A549 (cell line): ENCODE measurements at regions of chr20 and their contacts with region 1.

Region 1: DNA sequence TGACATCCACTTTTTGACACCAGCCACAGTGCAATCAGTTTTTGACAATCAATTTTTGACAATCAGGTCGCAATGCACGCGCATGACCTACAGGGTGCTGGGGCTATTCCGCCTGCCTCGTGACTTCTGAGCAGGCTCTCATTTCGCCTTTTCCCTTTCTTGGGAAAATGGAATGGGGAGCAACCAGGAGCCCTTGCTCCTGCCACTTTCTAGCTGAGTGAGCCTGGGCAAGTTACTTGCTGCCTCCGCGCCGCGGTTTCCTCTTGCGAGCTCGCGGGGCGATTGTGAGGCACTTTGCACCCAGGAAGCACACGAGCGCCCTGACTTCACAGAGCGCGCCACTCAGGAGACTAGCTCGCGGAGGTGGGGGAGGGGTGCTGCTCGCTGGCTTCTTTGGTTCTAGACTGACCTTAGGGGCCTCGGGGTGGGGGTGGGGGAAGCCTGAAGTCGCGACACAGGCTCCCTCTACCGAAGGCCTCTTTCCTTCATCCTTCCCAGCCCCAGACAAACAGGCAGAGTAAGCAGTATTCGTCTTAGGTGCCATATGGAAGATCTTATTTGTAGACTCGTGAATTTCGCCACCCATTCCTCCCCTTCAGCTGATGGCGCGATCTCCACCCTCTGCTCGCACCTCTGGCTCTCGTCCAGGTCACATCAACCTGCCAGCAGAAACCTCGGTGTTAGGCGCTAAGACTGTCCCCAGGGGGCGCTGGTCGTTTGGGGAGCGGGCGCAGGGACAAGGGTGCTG is 4.6 kb downstream of the TP53TG5 start:
- DNase-seq: peak; percentile 84 to 91
- ATAC-seq: peak; percentile 86 to 93
- H3K4me3 ChIP-seq: peak overlapping the region; percentile 43
- H3K27ac ChIP-seq: peak overlapping the region; percentile 40 to 73; a peak in 5 of 6 replicates
- H3K4me1 ChIP-seq: no peaks in the 10 kb centered on the region
- CTCF ChIP-seq: peak; percentile 94
- EP300 ChIP-seq: no peak
- POLR2A ChIP-seq: no peak
- RAD21 ChIP-seq: peak; percentile 87 to 89

Region 2: GRCh38 chr20:45153752-45154151 is 219.8 kb before region 1 on chr20:
- CTCF ChIA-PET with region 1: no interaction called
- POLR2A ChIA-PET with region 1: no interaction called
- DNase-seq: no peak
- ATAC-seq: no peak
- H3K4me3 ChIP-seq: no peak overlapping the region
- H3K27ac ChIP-seq: no peak overlapping the region
- H3K4me1 ChIP-seq: no peaks in the 10 kb centered on the region
- CTCF ChIP-seq: no peak
- EP300 ChIP-seq: no peak
- POLR2A ChIP-seq: no peak
- RAD21 ChIP-seq: no peak

Region 3: GRCh38 chr20:45322952-45323383 is 50.6 kb before region 1 on chr20:
- CTCF ChIA-PET with region 1: interaction called, 42 read pairs
- POLR2A ChIA-PET with region 1: no interaction called
- DNase-seq: peak in 1 of 2 experiments; percentile 63
- ATAC-seq: peak; percentile 61 to 71
- H3K4me3 ChIP-seq: no peak overlapping the region
- H3K27ac ChIP-seq: no peak overlapping the region
- H3K4me1 ChIP-seq: no peaks in the 10 kb centered on the region; the same call in 2 of the 3 replicates
- CTCF ChIP-seq: peak; percentile 59
- EP300 ChIP-seq: no peak
- POLR2A ChIP-seq: no peak
- RAD21 ChIP-seq: peak; percentile 81 to 82

Region 4: GRCh38 chr20:45362804-45363610 is 10.5 kb before region 1 on chr20 and contains the start of gene SYS1:
- CTCF ChIA-PET with region 1: interaction called, 133 read pairs
- POLR2A ChIA-PET with region 1: interaction called, 9 read pairs
- DNase-seq: peak; percentile 95 to 98
- ATAC-seq: peak; percentile 94 to 95
- H3K4me3 ChIP-seq: peak within 1 kb of the TSS; percentile 64
- H3K27ac ChIP-seq: peak within 1 kb of the TSS; percentile 95 to 97
- H3K4me1 ChIP-seq: peaks cover 27% of the 10 kb centered on the region; the same call in 2 of the 3 replicates
- CTCF ChIP-seq: peak; percentile 92
- EP300 ChIP-seq: no peak
- POLR2A ChIP-seq: peak; percentile 69
- RAD21 ChIP-seq: peak; percentile 85 to 87
- polyA plus RNA-seq, gene SYS1: 27.6 and 30.5 TPM in 2 replicates

Region 5: DNA sequence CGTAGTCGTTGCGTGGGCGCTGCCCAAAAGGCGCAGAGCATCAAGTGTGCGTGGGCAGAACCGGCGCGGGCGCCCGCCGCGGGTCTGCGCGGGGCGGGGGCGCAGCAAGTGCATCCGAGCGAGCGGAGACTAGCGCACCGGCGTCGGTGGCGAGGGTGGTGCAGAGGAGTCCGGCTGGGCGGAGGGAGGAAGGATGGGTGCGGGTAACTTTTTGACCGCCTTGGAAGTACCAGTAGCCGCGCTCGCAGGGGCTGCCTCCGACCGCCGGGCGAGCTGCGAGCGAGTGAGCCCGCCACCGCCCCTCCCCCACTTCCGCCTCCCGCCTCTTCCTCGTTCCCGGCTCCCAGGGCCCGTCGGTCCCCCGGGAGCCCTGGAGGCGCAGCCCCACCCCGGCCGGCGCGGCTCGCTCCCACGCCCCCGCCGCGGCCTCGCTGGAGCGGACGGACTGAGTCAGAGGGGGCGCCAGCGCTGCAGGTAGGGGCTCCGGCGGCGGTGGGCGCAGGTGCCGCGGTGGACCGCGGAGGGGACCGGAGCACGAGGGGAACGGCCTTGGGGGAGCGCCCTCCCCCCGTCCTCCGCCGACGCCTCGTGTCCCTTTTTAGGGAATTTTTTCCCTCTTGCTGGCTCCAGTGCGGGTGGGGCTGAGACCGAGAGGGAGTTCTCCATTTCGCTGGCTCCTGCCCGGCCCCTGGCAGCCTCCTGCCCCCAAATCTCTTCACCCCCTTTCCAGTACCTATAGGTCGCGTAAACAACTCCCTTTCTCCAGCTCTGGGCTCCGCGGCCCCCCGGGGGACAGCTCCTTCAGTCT is 32.9 kb after region 1 on chr20:
- CTCF ChIA-PET with region 1: interaction called, 56 read pairs
- POLR2A ChIA-PET with region 1: no interaction called
- DNase-seq: peak in 1 of 2 experiments; percentile 25
- ATAC-seq: peak; percentile 48 to 75; a peak in 5 of 6 replicates
- H3K4me3 ChIP-seq: peak overlapping the region; percentile 96
- H3K27ac ChIP-seq: peak overlapping the region; percentile 83 to 91
- H3K4me1 ChIP-seq: peaks cover 4% of the 10 kb centered on the region; the same call in 1 of the 3 replicates
- CTCF ChIP-seq: no peak
- EP300 ChIP-seq: no peak
- POLR2A ChIP-seq: no peak
- RAD21 ChIP-seq: no peak

Region 6: GRCh38 chr20:45436732-45437391 is 63.3 kb after region 1 on chr20:
- CTCF ChIA-PET with region 1: interaction called, 240 read pairs
- POLR2A ChIA-PET with region 1: interaction called, 5 read pairs
- DNase-seq: peak; percentile 77 to 90
- ATAC-seq: peak; percentile 98 to 99
- H3K4me3 ChIP-seq: peak overlapping the region; percentile 58
- H3K27ac ChIP-seq: peak overlapping the region; percentile 72 to 85
- H3K4me1 ChIP-seq: peaks cover 3% of the 10 kb centered on the region; the same call in 1 of the 3 replicates
- CTCF ChIP-seq: peak; percentile 92
- EP300 ChIP-seq: no peak
- POLR2A ChIP-seq: no peak
- RAD21 ChIP-seq: peak; percentile 91 to 96

Region 7: DNA sequence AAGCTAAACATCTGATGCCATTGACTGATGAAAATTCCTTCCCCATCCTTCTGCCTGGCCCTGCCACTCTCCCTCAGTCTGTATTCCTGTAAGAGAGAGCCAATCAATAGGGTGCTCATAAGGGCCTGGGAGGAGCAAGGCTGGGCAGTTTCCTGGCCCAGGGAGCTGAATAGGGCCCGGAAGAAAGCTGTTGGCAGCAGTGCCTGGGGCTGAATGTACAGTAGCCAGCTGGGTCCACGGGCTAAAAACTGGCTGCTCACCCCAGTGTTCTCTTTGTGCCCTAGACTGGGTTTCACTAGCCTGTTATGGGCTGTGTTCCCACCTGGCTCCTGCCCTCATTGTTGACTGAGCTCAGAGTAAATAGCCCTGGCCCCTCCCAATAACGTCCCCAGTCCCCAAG is 94.3 kb after region 1 on chr20:
- CTCF ChIA-PET with region 1: interaction called, 10 read pairs
- POLR2A ChIA-PET with region 1: no interaction called
- DNase-seq: no peak
- ATAC-seq: no peak
- H3K4me3 ChIP-seq: no peak overlapping the region
- H3K27ac ChIP-seq: no peak overlapping the region
- H3K4me1 ChIP-seq: peaks cover 8% of the 10 kb centered on the region; the same call in 2 of the 3 replicates
- CTCF ChIP-seq: no peak
- EP300 ChIP-seq: no peak
- POLR2A ChIP-seq: no peak
- RAD21 ChIP-seq: no peak